Naive thymus-derived CD8-positive, alpha-beta T cell (primary cell): ENCODE measurements at regions of chr20 and their contacts with region 1.

Region 1: GRCh38 chr20:62065669-62066338 is at the start of gene TAF4:
- DNase-seq: peak; percentile 67 to 90 (median 82)
- ATAC-seq: peak; percentile 73 to 75
- H3K4me3 Mint-ChIP-seq: peak within 1 kb of the TSS; percentile 86 to 94 (median 91)
- H3K27ac Mint-ChIP-seq: peak within 1 kb of the TSS; percentile 91 to 97 (median 96)
- H3K4me1 Mint-ChIP-seq: peaks cover 26 to 56% (median 52%) of the 10 kb centered on the region in 4 donors
- H3K27me3 Mint-ChIP-seq: no peaks in the 10 kb centered on the region
- polyA plus RNA-seq, gene TAF4: 0.31 to 1.6 (median 1.4) TPM

Region 2: DNA sequence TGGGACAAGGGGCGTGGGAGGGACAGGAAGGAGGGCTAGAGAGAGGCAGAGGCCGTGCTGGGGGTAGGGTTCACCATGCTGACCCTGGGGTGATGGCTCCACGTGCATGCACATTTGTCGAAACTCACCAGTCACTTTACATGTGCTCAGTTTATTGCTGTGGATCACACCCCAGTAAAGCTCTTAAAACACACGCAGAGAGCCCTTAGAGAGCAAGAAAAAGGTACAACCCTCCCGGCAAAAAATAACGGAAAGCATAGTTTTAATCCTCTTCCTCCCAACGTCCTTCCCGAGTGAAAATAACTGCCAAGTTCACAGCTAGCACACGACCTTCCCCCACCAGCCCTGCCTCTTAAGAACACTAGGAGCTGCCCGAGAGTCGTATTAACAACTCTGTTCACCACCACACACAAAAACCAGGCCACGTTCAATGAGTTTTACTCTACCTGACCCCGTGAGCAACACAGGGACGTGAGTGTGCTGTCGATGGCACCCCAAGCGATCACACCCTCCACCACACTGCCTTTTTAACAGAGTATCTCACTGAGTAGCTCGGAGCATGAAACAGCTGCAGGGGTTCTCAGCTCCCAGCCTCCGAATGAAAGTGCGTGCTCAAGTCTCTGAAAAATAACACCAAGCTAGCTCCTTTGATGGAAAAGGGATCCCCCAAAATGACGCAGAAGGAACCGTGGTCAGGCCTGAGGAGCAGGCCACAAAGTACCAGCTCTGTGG is 39.8 kb before region 1 on chr20:
- POLR2A ChIA-PET with region 1: interaction called, 53 read pairs
- DNase-seq: peak in 8 of 10 donors; percentile 22 to 53 (median 36)
- ATAC-seq: peak; percentile 84 to 89
- H3K4me3 Mint-ChIP-seq: peak overlapping the region in 4 of 10 donors; percentile 0 to 55 (median 18)
- H3K27ac Mint-ChIP-seq: peak overlapping the region; percentile 9 to 83 (median 40)
- H3K4me1 Mint-ChIP-seq: peaks cover 28 to 70% (median 46%) of the 10 kb centered on the region in 4 donors
- H3K27me3 Mint-ChIP-seq: no peaks in the 10 kb centered on the region

Region 3: DNA sequence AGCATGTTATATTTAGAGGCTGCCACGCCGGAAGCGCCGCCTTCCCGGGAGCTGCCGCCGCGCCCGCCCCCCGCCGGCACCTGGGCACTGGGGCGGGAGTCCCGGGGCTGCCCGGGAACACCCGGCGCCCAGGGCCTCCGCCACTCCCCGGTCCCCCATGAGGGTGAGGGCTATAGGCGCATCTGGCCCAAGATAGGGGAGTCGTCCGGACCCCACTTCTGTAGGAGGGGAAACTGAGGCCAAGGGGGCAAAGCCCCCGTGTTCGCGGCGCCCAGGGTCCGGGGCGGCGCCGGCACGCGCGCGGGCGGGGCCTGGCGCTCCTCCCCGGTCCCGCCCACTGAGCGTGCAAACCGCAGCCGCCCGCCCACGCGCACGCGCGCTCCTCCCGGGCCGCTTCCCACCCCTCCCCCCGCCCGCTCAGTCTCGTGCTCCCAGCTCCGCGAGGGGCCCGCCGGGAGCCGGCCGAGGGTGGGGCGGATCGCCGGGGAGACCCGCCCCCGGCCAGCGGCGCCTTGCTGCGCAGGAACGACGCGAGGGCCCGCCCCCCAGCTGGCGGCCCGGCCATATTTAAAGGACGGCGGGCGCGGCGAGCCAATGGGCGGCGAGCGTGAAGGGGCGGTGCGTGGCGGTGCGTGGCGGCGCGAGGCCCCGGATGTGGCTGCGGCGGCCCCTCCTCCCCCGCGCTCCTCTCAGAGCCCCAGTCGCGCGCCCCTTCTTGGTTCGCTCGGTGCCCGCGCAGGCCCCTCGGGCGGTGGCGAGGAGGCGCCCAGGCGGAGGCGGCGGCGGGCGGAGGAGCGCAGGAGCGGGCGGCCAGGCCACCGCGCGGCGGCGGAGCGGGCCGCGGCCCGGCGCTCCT is 56.2 kb after region 1 on chr20 and contains the start of gene LSM14B:
- POLR2A ChIA-PET with region 1: interaction called, 158 read pairs
- DNase-seq: peak; percentile 90 to 99 (median 96)
- ATAC-seq: peak; percentile 72 to 75
- H3K4me3 Mint-ChIP-seq: peak within 1 kb of the TSS; percentile 82 to 94 (median 88)
- H3K27ac Mint-ChIP-seq: peak within 1 kb of the TSS; percentile 70 to 97 (median 94)
- H3K4me1 Mint-ChIP-seq: peaks cover 27 to 65% (median 59%) of the 10 kb centered on the region in 4 donors
- H3K27me3 Mint-ChIP-seq: no peaks in the 10 kb centered on the region
- polyA plus RNA-seq, gene LSM14B: 1.5 to 2.4 (median 2.4) TPM

Region 4: GRCh38 chr20:62129731-62130531 is 64.1 kb after region 1 on chr20:
- POLR2A ChIA-PET with region 1: interaction called, 17 read pairs
- DNase-seq: peak in 1 of 10 donors; percentile 37
- ATAC-seq: peak; percentile 36
- H3K4me3 Mint-ChIP-seq: peak overlapping the region in 2 of 10 donors; percentile 19 to 24
- H3K27ac Mint-ChIP-seq: peak overlapping the region in 7 of 10 donors; percentile 13 to 91 (median 64)
- H3K4me1 Mint-ChIP-seq: peaks cover 21 to 64% (median 49%) of the 10 kb centered on the region in 4 donors
- H3K27me3 Mint-ChIP-seq: no peaks in the 10 kb centered on the region

Region 5: DNA sequence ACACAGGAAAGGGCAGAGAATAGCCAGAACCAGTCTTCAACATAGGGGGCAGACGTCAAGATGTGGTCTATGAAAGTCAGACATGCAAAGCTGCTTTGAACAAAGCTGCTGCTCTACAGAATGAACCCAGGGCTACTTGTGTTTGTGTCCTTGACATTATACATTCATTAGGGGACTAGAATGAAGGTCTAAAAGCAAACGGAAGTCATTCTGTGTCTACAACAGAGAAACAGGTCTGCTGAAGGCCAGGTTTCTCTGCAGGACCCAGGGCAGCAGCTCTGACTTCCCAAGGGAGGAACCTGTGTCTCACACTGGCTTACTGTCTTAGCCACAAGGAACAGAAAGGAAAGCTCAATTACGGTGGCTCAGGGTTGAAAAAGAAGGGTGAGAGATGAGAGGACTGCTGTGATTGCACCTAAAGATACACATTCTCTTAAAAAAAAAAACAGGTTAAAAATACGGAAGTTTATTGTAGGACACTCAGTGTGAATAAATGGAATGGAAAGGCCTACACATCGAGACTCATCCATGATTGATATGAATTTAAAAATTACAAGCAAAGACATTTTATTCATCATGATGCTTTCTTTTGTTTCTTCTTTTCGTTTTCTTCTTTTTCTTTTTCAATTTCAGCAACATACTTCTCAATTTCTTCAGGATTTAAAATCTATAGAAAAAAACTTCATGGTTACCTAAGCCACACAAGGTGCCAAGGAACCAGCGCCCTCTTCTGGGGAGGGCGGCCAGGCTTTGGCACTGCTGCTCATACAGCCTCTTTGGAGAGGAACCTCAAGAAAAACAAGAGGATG is 70.7 kb after region 1 on chr20:
- POLR2A ChIA-PET with region 1: interaction called, 43 read pairs
- DNase-seq: peak; percentile 61 to 86 (median 70)
- ATAC-seq: peak; percentile 70 to 79
- H3K4me3 Mint-ChIP-seq: no peak overlapping the region
- H3K27ac Mint-ChIP-seq: peak overlapping the region; percentile 19 to 94 (median 82)
- H3K4me1 Mint-ChIP-seq: peaks cover 25 to 51% (median 41%) of the 10 kb centered on the region in 4 donors
- H3K27me3 Mint-ChIP-seq: no peaks in the 10 kb centered on the region

Region 6: DNA sequence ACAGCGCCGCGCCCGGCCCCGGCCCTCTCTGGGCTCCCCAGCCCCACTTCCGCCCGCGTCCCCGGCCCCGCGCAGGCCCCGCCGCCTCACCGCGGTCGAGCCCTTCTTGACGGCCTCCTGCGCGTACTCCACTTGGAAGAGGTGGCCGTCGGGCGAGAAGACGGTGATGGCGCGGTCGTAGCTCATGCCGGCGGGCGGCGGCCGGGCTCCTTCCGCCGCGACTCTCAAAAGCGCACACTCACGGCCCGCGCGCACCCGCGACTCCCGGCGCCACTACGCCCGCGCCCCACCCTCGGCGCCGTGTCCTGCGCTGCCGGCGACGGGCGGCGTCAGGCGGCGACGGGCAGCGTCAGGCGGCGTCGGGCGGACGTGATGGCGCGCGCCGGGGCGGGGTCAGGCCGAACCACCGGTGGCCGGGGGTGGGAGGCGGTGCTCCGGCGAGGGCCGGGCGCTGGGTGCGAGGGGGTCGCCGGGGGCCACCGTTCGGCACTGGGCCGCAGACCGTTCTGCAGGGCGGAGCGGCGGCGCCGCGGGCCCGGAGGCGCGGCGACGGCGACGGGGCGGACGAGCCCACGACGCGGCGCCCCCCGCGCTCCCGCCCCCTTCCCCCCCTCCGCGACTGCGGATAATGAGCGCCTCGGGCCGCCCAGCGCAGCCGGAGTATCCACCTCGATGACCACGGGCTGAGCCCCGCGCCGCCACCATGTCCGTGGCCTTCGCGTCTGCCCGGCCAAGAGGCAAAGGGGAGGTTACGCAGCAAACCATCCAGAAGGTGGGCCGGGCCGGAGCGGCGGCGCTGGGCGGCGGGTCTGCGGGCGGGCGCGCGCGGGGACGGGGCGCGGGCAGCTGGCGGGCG is 77.5 kb after region 1 on chr20 and contains the starts of genes PSMA7 and SS18L1:
- POLR2A ChIA-PET with region 1: interaction called, 43 read pairs
- DNase-seq: peak; percentile 73 to 90 (median 84)
- ATAC-seq: peak; percentile 82 to 84
- H3K4me3 Mint-ChIP-seq: peak within 1 kb of the TSS; percentile 81 to 93 (median 89)
- H3K27ac Mint-ChIP-seq: peak within 1 kb of the TSS; percentile 85 to 97 (median 94)
- H3K4me1 Mint-ChIP-seq: peaks cover 24 to 59% (median 50%) of the 10 kb centered on the region in 4 donors
- H3K27me3 Mint-ChIP-seq: no peaks in the 10 kb centered on the region
- polyA plus RNA-seq, gene PSMA7: 362 to 473 (median 419) TPM
- polyA plus RNA-seq, gene SS18L1: 0.39 to 0.58 (median 0.50) TPM

Region 7: GRCh38 chr20:62285722-62286121 is 219.9 kb after region 1 on chr20:
- POLR2A ChIA-PET with region 1: no interaction called
- DNase-seq: no peak
- ATAC-seq: no peak
- H3K4me3 Mint-ChIP-seq: no peak overlapping the region
- H3K27ac Mint-ChIP-seq: no peak overlapping the region
- H3K4me1 Mint-ChIP-seq: peaks cover 0 to 3% (median 0%) of the 10 kb centered on the region in 4 donors
- H3K27me3 Mint-ChIP-seq: no peaks in the 10 kb centered on the region